Mammary epithelial cell (primary cell): ENCODE measurements at regions of chr1 and their contacts with region 1.

Region 1: DNA sequence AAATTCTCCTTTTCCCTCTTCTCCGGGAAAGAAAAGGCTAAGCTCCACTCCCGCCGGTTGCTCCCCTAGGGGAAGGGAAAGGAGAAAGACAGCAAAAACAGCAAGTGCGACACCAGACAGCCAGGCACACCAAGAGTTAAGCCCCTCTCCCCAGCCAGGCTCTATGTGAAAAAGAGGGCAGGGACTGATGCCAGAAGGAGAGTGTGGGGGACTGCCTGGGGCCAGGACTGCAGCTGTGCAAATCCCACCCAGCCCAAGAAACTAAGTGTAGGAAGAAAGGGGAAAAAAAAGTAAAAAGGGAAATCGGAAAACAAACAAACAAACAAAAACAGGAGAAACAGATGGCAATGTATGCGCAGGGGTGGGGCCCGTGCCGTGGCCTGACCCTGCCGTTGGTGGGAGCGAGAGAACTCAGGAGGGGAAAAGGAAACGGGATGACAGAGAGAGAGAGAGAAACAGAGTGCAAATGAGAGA is 27.7 kb upstream of the FMO1 start:
- DNase-seq: peak; percentile 9
- H3K4me3 ChIP-seq: peak overlapping the region in 2 of 3 experiments; percentile 22 to 32
- H3K27ac ChIP-seq: peak overlapping the region; percentile 93
- H3K4me1 ChIP-seq: peaks cover 59% of the 10 kb centered on the region
- H3K27me3 ChIP-seq: no peaks in the 10 kb centered on the region
- CTCF ChIP-seq: no peak

Region 2: DNA sequence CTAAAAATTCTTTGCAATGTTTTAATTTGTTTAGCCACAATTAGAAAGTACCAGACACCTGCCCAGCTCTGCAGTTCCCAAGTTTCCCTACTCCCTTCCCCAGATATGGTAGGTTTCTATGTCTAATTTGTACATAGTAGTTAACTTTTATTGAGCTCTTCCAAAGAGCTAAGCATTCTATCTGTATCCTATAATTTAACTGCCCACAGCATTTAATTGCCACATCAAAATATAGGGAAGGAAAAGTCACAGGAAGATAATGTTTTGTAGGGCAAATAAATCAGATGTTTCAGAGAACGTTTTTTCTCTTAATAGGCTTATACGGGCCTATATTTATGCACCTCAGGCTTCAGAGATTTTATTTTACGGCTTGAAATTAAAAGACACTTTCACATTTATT is 145.6 kb before region 1 on chr1:
- CTCF ChIA-PET with region 1: interaction called, 12 read pairs
- dilution Hi-C with region 1: no loop called
- in situ Hi-C with region 1: no loop called
- intact Hi-C with region 1: no loop called
- DNase-seq: no peak
- H3K4me3 ChIP-seq: no peak overlapping the region
- H3K27ac ChIP-seq: no peak overlapping the region
- H3K4me1 ChIP-seq: no peaks in the 10 kb centered on the region
- H3K27me3 ChIP-seq: no peaks in the 10 kb centered on the region
- CTCF ChIP-seq: no peak

Region 3: GRCh38 chr1:171166361-171166760 is 54.3 kb before region 1 on chr1:
- CTCF ChIA-PET with region 1: no interaction called
- dilution Hi-C with region 1: loop called (anchors 5 kb)
- in situ Hi-C with region 1: no loop called
- intact Hi-C with region 1: loop called (anchors 2 kb)
- DNase-seq: peak; percentile 75
- H3K4me3 ChIP-seq: no peak overlapping the region
- H3K27ac ChIP-seq: peak overlapping the region; percentile 91
- H3K4me1 ChIP-seq: peaks cover 9% of the 10 kb centered on the region
- H3K27me3 ChIP-seq: no peaks in the 10 kb centered on the region
- CTCF ChIP-seq: no peak

Region 4: DNA sequence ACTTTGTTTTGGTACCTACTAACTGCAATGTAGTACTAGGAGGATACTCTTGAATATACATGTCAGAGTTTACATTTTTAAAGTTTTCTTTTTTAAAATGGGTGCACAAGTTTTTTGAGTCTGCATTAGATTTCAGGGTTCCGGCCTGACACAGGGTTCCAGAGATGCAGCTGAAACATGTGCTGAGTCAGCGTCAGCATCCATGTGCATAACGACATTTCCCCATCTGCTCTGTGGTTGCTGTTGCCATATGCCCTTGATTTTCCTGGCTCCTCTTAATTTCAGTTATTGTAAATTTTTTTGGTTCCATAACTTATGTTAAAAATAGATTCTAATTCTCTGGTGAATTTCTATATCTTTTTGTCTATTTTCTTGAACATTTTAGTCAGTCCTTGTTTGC is 548.6 kb after region 1 on chr1:
- CTCF ChIA-PET with region 1: no interaction called
- dilution Hi-C with region 1: no loop called
- in situ Hi-C with region 1: no loop called
- intact Hi-C with region 1: no loop called
- DNase-seq: no peak
- H3K4me3 ChIP-seq: no peak overlapping the region
- H3K27ac ChIP-seq: no peak overlapping the region
- H3K4me1 ChIP-seq: no peaks in the 10 kb centered on the region
- H3K27me3 ChIP-seq: no peaks in the 10 kb centered on the region
- CTCF ChIP-seq: no peak